Activated naive CD4-positive, alpha-beta T cell treated with anti-CD3 and anti-CD28 coated beads for 36 hours (primary cell): ENCODE measurements at regions of chr1 and their contacts with region 1.

Region 1: DNA sequence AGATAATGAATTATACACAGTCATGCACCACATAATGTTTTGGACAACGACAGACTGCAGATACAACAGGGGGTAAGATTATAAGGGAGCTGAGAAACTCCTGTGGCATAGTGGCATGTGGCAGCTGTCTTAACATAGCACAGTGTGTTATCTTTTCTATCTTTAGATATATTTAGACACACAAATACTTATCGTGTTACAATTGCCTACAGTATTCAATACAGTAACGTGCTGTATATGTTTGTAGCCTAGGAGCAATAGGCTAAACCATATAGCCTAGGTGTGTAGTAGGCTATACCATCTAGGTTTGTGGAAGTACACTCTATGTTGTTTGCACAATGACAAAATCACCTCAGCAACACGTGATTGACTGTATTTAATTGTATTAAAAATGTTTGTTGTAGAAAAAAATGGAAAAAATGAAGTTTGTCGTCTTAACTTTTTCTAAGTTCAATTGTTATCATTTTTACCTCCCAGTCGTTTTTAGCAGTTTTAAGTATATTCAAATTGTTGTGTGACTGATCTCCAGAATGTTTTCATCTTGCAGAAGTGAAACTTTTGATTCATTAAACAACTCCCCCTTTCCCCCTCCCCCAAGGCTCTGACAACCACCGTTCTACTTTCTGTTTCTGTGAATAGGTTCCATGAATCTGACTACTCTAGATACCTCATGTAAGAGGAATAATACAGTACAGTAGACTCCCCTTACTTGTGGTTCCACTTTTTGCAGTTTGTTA is 351.0 kb upstream of the B3GALT2 start:
- DNase-seq: peak; percentile 91
- H3K4me3 Mint-ChIP-seq: no peak overlapping the region
- H3K27ac Mint-ChIP-seq: peak overlapping the region; percentile 26
- H3K4me1 Mint-ChIP-seq: peaks cover 43% of the 10 kb centered on the region
- H3K27me3 Mint-ChIP-seq: no peaks in the 10 kb centered on the region

Region 2: DNA sequence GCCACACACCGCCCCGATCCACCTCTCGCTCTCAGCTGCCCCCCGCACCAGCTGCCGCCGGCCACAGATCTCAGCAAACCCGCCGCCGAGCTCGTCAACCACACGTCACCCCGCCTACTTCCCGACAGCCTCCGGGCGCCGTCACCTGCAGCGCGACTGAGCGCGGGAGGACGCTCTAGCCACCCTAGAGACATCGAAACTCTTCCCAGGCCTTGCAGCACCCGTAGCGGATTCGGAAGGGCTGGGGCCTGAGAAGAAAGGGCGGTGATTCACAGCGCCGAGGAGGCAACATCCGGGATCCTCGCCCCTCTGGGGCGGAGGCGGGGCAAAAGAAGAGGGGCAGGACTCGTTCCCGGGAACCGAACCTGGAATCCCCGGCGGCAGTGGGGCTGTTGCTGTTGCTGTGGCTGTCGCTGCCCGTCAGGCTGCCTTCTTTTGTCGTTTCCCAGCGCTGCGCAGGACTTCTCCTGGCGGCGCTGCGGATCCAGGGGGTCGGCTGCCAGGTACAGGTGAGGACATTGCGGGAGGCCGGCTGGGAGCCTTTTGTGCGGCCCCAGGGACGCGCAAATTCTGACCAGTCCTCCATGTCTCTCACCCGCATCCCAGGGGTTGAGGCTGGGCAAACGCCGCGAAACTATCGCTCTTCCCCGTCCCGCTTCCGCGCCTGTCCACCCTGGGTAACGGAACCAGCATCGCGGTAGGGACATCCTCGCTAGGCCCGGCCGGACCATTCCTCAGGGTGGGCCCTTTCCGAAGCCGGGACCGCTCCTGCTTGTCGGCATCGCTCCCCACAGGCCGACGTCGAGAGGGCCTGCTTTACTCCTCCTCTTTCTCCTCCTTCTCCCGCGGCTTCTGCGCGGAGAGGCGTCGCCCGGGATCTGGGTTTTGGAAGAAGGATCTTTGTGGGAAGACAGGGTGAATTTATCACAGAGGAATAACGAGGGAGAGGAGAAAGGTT is 477.9 kb before region 1 on chr1 and contains the starts of genes RO60 and UCHL5:
- CTCF ChIA-PET with region 1: no interaction called
- intact Hi-C with region 1: loop called (anchors 2 kb)
- DNase-seq: peak; percentile 97
- H3K4me3 Mint-ChIP-seq: peak within 1 kb of the TSS; percentile 94
- H3K27ac Mint-ChIP-seq: peak within 1 kb of the TSS; percentile 97
- H3K4me1 Mint-ChIP-seq: peaks cover 59% of the 10 kb centered on the region
- H3K27me3 Mint-ChIP-seq: no peaks in the 10 kb centered on the region
- total RNA-seq, gene RO60: 42.8 to 48.0 TPM
- total RNA-seq, gene UCHL5: 63.4 to 68.8 TPM

Region 3: DNA sequence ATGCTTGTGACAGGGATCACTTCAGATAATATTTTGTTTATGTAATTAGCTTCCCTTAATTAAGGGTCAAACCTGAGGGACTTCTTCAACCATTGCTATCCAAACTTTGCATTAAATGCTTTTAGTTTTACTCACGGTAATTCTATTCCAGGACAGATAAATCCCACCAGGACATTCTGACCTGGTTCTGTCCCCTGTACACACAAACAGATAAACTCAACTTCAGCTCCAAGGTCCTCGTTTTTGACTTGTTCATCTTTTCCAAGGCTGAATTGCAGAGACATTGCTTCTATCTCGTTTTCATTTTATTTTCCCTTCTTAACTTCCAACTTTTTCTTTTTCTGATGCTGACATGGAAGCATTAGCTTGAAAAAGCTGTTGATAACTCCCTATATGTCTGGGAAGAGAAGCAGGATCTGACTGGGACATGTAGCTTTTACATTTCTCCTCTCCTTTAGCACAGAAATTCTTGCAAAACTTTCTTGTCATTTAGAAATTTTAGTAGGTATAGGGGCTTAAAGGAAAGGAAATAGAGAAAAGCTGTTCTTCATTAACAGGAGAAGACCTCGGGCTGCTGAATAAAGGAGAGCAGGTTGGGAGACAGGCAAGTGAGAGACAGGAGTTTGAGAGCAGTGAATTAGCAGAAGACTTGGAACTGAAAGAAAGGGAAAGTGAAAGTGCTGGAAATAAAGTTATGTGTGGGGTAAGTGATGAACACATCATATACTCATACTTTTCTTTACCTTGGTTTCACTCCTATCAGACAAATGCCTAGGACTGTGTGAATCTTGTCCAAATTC is 119.3 kb before region 1 on chr1:
- CTCF ChIA-PET with region 1: no interaction called
- intact Hi-C with region 1: loop called (anchors 1 kb)
- DNase-seq: no peak
- H3K4me3 Mint-ChIP-seq: peak overlapping the region; percentile 52
- H3K27ac Mint-ChIP-seq: peak overlapping the region; percentile 39
- H3K4me1 Mint-ChIP-seq: peaks cover 46% of the 10 kb centered on the region
- H3K27me3 Mint-ChIP-seq: no peaks in the 10 kb centered on the region

Region 4: DNA sequence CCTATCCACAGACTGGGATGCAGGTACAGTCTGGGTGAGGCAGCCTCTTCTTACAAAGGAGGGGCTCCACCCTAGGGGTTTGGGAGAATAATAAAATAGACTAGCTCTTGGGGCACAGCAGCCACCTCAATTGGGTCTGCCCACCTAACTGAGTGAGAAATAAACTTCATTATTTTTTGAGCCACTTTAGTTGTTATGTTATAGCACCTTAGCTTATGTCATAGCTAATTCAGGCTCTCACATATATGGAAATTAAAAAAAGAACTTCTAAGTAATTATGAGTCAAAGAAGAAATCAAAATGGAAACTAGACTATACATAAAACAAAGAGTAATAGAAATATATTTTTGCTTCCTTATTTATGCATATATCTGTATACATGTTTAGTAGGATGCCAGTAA is 32.5 kb before region 1 on chr1:
- CTCF ChIA-PET with region 1: no interaction called
- intact Hi-C with region 1: loop called (anchors 1 kb)
- DNase-seq: no peak
- H3K4me3 Mint-ChIP-seq: no peak overlapping the region
- H3K27ac Mint-ChIP-seq: no peak overlapping the region
- H3K4me1 Mint-ChIP-seq: peaks cover 7% of the 10 kb centered on the region
- H3K27me3 Mint-ChIP-seq: no peaks in the 10 kb centered on the region

Region 5: DNA sequence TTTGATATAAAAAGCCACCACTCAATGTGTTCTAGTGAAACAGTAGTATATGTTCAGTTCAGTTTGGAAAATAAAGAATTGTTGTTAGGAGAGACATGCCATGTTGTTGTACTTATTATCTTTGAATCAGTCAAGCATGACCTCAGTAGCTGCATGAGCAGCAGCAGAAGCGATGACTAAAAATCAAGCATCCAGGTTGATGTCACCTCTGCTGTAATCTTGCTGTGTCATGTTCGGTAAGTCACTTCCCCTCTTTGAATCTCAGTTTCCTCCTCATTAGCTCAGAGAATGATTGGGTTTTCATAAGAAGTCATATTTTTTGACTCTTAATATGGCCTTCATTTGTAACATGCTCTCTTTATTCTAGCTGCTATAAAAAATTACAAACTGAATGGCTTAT is 77.4 kb after region 1 on chr1:
- CTCF ChIA-PET with region 1: no interaction called
- intact Hi-C with region 1: no loop called
- DNase-seq: no peak
- H3K4me3 Mint-ChIP-seq: no peak overlapping the region
- H3K27ac Mint-ChIP-seq: no peak overlapping the region
- H3K4me1 Mint-ChIP-seq: no peaks in the 10 kb centered on the region
- H3K27me3 Mint-ChIP-seq: no peaks in the 10 kb centered on the region

Region 6: DNA sequence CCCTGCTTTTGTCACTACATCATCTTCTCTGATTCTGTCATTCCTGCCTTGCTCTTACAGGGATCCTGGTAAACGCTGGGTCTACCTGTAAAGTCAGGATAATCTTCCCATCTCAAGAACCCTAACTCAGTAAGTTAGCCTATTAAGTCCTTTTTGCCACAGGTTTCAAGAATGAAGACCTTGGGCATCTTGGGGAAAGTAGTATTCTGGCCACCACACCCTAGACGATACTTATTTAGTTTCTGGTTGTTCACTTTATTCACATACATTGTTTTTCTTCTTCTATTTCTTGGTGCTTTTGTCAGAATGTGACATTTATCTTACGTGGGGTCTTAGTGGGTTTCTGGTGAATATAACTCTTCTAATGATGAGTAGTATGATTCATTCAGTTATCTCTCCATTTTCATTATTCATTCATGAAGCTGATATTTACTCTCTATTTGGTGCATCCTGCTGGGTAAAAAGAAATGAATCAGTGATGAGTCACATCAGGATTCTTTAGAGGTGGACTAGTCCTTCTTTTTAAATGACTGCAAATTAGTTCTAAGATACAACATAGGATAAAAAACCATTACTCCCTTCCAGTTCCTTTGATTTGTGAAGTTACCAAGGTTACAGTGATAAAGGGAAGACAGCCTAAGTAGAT is 163.4 kb after region 1 on chr1:
- CTCF ChIA-PET with region 1: no interaction called
- intact Hi-C with region 1: loop called (anchors 2 kb)
- DNase-seq: no peak
- H3K4me3 Mint-ChIP-seq: no peak overlapping the region
- H3K27ac Mint-ChIP-seq: no peak overlapping the region
- H3K4me1 Mint-ChIP-seq: peaks cover 15% of the 10 kb centered on the region
- H3K27me3 Mint-ChIP-seq: no peaks in the 10 kb centered on the region